ENCODE measurements at regions of chr9 and their contacts with region 1.

Region 1: GRCh38 chr9:126500684-126501382 is 112.9 kb upstream of the LMX1B start:
- DNase-seq: peak; percentile 91

Region 2: DNA sequence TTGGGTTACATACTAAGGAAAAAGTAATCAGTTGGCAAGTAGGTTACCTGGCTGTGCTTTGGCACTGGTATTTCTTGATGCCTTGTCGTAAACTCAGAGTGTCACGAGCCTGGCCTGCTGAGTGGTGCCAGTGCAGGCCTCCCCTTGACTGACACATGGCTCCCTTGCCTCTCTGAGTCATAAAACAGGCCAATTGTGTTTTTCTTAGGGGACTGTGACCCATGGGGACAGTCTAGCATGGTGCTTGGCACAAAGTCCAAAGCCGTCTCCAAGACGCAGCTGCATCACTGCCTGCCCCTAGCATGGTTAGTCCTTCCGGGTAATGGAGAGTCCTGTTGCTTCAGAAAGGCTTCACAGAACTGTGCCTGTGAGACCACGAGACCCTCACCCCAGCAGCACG is 41.7 kb before region 1 on chr9:
- intact Hi-C with region 1: no loop called
- DNase-seq: no peak

Region 3: DNA sequence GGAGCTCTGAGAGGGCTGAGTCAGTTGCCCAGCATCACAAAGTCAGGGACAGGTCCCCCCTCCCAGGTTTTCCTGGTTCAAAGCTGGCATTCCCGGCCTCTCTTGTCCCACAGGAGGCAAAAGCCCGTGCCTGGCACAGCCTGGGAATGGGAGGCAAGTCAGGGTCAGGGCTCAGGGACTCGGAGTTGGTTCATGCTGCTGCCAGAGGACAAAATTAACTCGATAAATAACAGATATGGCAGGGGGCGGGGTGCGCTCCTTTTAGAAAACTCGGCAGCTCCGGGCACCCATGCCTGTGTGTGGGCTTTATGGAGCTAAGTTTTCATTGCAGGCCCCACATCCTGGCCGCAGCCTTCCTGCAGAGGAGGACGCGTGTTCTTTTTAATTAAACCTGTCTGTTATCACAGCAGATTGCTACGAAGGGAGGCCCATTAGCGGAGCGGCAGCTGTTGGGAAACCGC is 50.1 kb after region 1 on chr9:
- intact Hi-C with region 1: loop called (anchors 2 to 5 kb)
- DNase-seq: no peak

Region 4: DNA sequence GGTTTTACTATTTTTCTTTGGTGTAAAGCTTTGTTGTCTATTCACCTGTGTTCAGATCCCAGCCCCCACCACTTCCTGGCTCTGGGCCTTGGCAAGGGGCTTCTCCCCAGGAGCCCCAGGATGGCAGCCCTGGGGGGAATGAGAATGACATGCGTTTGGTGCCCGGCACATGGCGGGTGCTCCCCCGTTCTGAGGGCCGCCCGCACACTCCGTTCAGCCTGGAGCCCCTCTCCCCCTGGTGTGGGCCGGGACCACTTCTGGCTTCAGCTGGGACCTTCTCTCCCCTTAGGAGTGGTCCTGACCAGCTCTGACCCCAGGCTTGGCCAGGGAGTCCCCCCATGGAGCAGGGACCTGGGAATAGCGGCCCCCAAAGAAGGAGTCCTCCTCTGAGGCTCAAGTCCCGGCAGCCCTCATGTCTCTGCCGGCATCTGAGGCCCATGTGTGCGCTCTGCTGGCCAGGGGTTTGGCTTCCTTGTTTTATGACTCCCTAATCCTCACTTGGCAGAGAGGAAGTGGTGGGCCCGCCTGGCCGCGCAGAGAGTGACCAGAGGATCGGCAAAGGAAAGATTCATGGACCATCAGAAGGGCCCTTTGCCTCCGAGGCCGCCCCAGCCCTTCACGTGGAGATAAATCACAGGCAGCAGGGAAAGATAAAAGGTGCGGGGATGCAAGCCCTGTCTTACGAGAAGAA is 55.9 kb after region 1 on chr9:
- intact Hi-C with region 1: loop called (anchors 2 to 5 kb)
- DNase-seq: no peak

Region 5: DNA sequence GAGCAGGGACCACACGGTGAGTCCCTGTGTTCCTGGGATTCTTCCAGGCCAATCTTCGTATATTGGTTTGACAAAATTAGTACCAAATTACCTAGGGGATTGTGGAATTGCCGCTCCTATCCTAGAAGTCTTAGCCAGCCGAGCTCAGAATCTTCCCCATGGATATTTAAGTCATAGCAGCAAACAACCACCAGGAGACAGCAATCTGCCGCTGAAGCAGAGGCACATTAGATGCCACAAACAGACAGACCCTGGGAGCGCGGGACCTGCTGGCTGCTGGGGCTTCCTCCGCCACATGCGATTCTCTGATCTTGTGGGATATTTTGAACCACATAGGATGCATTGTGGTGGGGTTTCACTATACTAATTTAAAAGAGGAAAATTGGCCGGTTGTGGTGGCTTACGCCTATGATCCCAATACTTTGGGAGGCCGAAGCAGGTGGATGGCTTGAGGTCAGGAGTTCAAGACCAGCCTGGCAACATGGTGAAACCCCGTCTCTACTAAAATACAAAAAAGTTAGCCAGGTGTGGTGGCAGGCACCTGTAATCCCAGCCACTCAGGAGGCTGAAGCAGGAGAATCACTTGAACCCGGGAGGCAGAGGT is 272.3 kb after region 1 on chr9:
- intact Hi-C with region 1: loop called in 1 of 2 experiments (anchors 10 kb)
- DNase-seq: no peak

Measured in posterior vena cava (tissue), 2 donors.